Spleen (tissue), 13 donors: ENCODE measurements at regions of chr4 and their contacts with region 1.

Region 1: GRCh38 chr4:173420324-173420752 is 21.4 kb upstream of the SCRG1 start:
- DNase-seq: no peak
- H3K4me3 ChIP-seq: peak overlapping the region in 1 of 8 donors; percentile 2
- H3K27ac ChIP-seq: no peak overlapping the region
- H3K4me1 ChIP-seq: peaks cover 0 to 47% (median 17%) of the 10 kb centered on the region in 6 donors
- H3K27me3 ChIP-seq: no peaks in the 10 kb centered on the region
- CTCF ChIP-seq: peak in 10 of 11 experiments; percentile 17 to 61 (median 47)
- POLR2A ChIP-seq: no peak

Region 2: DNA sequence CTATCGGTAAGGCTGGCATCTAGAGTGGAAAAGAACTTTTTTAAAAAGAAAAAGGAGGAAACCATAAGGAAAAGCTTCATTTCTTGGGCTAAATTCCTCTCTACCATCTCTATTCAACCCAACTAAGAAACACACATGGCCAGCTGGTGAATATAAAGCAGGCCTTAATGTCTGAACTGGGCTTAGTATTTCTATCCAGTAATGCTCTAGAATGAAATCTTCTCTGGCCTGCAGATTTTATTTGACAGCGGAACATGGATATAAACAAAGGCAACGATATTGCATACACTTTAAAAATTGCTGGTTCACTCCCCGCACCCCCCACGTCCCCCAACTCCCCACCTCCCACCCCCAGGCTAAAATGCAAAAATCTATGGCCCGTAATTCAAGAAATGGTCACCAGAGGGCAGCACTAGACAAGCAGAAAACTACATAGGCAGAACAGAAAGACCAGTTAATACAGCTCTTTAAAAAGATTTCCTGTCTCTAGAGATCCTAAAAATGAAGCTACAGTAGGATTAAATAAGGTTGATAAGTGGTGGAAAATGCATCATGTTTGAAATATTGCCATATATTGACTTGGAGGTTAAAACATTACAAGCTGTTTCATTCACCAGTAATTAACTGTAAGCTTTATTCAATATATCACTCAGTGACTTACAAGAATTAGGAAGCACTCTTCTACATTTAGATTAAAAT is 407.0 kb before region 1 on chr4:
- intact Hi-C with region 1: loop called (anchors 5 kb)
- DNase-seq: no peak
- H3K4me3 ChIP-seq: no peak overlapping the region
- H3K27ac ChIP-seq: no peak overlapping the region
- H3K4me1 ChIP-seq: peaks cover 0 to 5% (median 0%) of the 10 kb centered on the region in 6 donors
- H3K27me3 ChIP-seq: no peaks in the 10 kb centered on the region
- CTCF ChIP-seq: peak; percentile 34 to 86 (median 70)
- POLR2A ChIP-seq: no peak

Region 3: DNA sequence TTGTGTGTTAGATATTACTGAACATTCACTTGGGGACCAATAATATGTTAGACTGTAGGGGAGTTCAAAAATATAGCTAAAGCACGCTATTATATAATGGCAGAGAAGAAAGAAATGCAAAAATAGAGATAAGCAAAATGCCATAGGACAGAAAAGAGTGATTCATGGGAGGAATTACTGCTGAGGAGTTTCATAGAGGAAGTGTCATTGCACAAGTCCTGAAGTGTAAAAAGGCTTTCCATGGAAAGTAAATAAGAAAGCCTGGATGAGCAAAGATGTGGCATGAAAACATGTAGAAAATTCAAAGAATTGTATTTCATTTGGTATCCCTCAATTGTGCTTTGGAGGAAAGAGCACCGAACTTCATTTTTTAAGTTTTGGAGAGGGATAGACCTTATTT is 100.6 kb before region 1 on chr4:
- intact Hi-C with region 1: loop called (anchors 5 kb)
- DNase-seq: no peak
- H3K4me3 ChIP-seq: no peak overlapping the region
- H3K27ac ChIP-seq: no peak overlapping the region
- H3K4me1 ChIP-seq: peaks cover 0 to 16% (median 6%) of the 10 kb centered on the region in 6 donors
- H3K27me3 ChIP-seq: no peaks in the 10 kb centered on the region
- CTCF ChIP-seq: no peak
- POLR2A ChIP-seq: no peak

Region 4: GRCh38 chr4:173380987-173381386 is 39.4 kb before region 1 on chr4:
- intact Hi-C with region 1: no loop called
- DNase-seq: no peak
- H3K4me3 ChIP-seq: no peak overlapping the region
- H3K27ac ChIP-seq: no peak overlapping the region
- H3K4me1 ChIP-seq: peaks cover 0 to 9% (median 0%) of the 10 kb centered on the region in 6 donors
- H3K27me3 ChIP-seq: no peaks in the 10 kb centered on the region
- CTCF ChIP-seq: no peak
- POLR2A ChIP-seq: no peak

Region 5: DNA sequence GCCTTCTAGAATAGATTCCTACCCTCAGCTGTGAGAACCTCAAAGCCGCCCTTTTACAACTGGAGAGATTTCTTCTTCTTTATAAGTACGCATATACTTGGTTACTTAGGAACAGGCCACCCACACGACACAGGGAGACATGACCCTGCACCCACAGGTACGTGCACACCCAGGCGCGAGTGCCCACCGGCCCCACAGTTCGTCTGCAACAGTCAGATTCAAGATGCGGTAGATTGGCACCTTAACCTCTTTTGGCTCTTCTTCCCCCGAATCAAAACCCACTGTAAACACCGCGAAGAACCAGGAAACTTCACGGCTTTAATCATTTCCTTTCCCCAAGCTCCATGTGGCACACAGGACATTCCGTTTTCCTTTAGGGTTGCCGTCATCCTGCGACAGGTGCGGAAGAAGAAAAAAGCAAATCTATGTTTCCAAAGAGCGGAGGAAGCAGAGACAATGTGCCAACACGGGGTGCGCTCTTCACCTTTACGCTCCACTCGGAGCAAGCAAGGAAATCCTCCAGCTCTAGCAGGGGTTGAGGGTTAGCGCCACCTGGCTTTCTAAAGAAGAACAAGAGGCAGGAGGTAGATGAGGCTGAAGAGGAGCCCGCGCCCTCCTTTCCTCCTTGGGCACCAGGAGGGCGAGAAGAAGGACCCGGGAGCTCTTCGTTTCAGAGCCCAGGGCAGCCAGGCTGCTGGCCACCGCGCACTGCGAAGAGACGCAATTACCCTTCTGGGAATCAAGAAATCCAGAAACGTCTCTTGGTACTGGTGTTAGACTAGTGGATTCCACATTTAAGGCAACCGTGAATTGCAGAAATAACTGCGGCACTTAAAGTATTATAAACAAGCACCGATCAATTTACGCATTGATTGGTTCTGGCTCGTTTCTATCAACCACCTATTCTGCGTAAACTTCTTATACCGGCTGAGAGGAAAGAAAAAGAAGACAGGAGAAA is 74.0 kb after region 1 on chr4:
- intact Hi-C with region 1: loop called (anchors 10 kb)
- DNase-seq: peak; percentile 81
- H3K4me3 ChIP-seq: peak overlapping the region in 7 of 8 donors; percentile 6 to 57 (median 18)
- H3K27ac ChIP-seq: no peak overlapping the region
- H3K4me1 ChIP-seq: peaks cover 0 to 40% (median 19%) of the 10 kb centered on the region in 6 donors
- H3K27me3 ChIP-seq: peaks cover 0 to 44% (median 7%) of the 10 kb centered on the region in 7 donors
- CTCF ChIP-seq: peak; percentile 38 to 82 (median 63)
- POLR2A ChIP-seq: no peak